ENCODE measurements at regions of chr3 and their contacts with region 1.

Region 1: DNA sequence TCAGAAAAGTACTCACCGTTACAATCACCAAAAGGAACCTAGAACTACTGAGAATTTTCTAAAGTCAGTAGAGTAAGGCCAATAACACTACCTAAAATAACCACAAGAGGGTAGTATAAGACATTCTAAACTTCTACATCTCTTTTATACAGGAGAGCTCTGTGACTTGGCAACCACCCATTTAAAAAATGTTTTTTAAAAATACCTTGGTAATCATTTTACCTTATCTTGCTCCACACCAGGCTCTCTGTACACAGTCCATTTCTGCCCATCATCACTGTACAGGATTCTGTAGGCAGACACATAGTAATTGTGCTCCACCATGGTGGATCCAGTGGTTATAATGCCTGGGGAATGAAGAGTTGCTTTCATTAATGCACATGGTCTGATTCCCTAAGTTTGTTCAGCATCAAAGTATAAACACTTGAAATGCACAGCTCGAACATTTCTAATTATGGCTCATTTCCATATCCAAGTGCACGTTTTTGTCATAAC is 54.5 kb downstream of the ST3GAL6 start:
- DNase-seq: no peak
- ATAC-seq: peak; percentile 82 to 83
- H3K4me3 ChIP-seq: no peak overlapping the region
- H3K27ac ChIP-seq: no peak overlapping the region
- H3K4me1 ChIP-seq: no peaks in the 10 kb centered on the region
- H3K27me3 ChIP-seq: no peaks in the 10 kb centered on the region
- CTCF ChIP-seq: peak; percentile 76

Region 2: DNA sequence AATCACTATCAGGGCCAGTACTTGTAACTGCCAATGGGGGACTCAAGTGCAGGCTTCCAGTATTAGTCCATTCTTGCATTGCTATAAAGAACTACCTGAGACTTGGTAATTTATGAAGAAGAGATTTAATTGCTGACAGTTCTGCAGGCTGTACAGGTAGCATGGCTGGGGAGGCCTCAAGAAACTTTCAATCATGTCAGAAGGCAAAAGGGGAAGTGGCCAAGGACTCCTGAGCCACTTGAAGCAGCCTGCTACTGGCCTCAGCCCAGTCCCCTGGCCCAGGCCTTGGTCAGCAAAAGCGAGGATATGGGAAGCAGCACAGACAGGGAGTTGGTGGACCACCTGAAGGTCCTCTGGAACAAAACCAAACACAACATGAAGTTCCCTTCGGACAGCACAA is 383.8 kb before region 1 on chr3:
- intact Hi-C with region 1: no loop called
- DNase-seq: no peak
- ATAC-seq: no peak
- H3K4me3 ChIP-seq: no peak overlapping the region
- H3K27ac ChIP-seq: no peak overlapping the region
- H3K4me1 ChIP-seq: no peaks in the 10 kb centered on the region
- H3K27me3 ChIP-seq: no peaks in the 10 kb centered on the region
- CTCF ChIP-seq: no peak

Region 3: DNA sequence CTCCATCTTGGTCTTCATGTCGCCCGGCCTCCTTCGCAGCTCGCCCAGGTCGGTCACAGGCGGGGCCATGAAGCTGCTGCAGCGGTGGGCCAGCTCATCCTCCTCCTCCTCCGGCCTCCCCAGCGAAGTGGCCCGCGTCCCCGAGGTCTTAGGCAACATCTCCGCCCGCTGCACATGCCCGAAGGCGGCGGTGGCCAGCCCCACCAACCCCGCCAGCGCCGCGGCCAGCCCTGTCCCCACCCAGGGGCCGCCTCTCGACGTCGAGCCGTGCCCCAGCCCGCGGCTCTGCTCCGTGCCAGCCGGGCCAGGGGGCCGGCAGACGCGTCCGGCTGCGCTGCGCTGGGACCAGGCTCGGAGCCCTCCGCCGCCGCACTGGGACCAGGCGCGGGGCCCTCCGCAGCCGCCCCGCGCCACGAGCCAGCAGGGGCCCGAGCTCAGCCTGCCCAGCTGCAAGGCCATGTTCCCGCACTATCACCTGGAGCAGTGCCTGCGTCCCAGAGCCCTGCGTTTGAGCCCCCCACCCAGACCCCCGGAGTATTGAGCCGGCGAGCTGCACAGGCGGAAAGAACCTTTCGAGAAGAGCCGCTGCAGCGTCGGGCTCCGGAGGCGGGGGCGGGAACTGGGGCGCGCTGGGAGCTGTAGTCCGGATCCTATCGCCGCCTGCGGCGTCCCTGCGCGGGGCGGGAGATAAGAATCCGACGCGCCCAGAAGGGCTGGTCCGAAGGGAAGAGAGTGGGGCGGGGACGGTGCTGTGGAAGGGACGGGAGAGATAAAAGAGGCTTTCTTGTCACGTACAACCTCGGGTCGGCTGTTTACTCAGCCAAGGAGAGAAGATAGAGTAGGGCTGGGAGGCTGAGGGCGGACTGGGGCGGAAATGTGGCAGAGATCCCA is 224.3 kb before region 1 on chr3 and contains the start of gene CPOX:
- intact Hi-C with region 1: loop called (anchors 10 kb)
- DNase-seq: peak; percentile 93
- ATAC-seq: peak; percentile 98
- H3K4me3 ChIP-seq: peak within 1 kb of the TSS; percentile 80
- H3K27ac ChIP-seq: peak within 1 kb of the TSS; percentile 78
- H3K4me1 ChIP-seq: peaks cover 21% of the 10 kb centered on the region
- H3K27me3 ChIP-seq: no peaks in the 10 kb centered on the region
- CTCF ChIP-seq: no peak
- total RNA-seq, gene CPOX: 18.0 TPM

Region 4: GRCh38 chr3:98994128-98994762 is 176.7 kb after region 1 on chr3:
- intact Hi-C with region 1: loop called (anchors 5 kb)
- DNase-seq: no peak
- ATAC-seq: no peak
- H3K4me3 ChIP-seq: no peak overlapping the region
- H3K27ac ChIP-seq: no peak overlapping the region
- H3K4me1 ChIP-seq: no peaks in the 10 kb centered on the region
- H3K27me3 ChIP-seq: no peaks in the 10 kb centered on the region
- CTCF ChIP-seq: peak; percentile 64

Region 5: DNA sequence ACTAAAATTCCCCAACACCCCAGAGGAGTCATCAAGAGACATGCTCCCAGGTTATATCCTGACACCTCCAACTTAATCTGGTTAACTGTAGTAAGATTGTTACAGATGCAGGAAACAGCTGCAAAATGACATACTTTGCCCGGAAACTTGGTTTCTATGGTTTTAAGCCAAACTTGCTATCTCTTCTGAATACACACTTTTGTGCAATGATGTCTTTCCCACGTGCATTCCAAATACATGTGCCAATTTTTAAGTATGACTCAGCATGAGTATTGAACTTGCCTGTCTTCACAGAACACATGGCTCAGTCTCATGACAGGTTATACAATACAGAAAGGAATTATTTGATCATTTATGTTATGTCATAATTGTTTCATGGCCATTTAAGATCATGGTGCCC is 290.9 kb after region 1 on chr3:
- intact Hi-C with region 1: no loop called
- DNase-seq: no peak
- ATAC-seq: peak in 1 of 2 donors; percentile 28
- H3K4me3 ChIP-seq: no peak overlapping the region
- H3K27ac ChIP-seq: no peak overlapping the region
- H3K4me1 ChIP-seq: no peaks in the 10 kb centered on the region
- H3K27me3 ChIP-seq: no peaks in the 10 kb centered on the region
- CTCF ChIP-seq: no peak

Measured in lower lobe of right lung (tissue), 2 donors.